CD8-positive, alpha-beta T cell (primary cell): ENCODE measurements at regions of chr4 and their contacts with region 1.

Region 1: GRCh38 chr4:99563310-99564186 is at the start of gene TRMT10A:
- DNase-seq: peak; percentile 87 to 98 (median 95)
- ATAC-seq: peak; percentile 79
- H3K4me3 ChIP-seq: peak within 1 kb of the TSS; percentile 71 to 83
- H3K4me3 Mint-ChIP-seq: peak within 1 kb of the TSS; percentile 94
- H3K27ac ChIP-seq: peak within 1 kb of the TSS; percentile 92 to 96
- H3K27ac Mint-ChIP-seq: peak within 1 kb of the TSS; percentile 99
- H3K4me1 ChIP-seq: no peaks in the 10 kb centered on the region
- H3K4me1 Mint-ChIP-seq: peaks cover 19% of the 10 kb centered on the region
- H3K27me3 ChIP-seq: no peaks in the 10 kb centered on the region
- H3K27me3 Mint-ChIP-seq: peaks cover 19% of the 10 kb centered on the region
- CTCF ChIP-seq: no peak
- total RNA-seq, gene TRMT10A: 0.90 to 1.5 TPM

Region 2: DNA sequence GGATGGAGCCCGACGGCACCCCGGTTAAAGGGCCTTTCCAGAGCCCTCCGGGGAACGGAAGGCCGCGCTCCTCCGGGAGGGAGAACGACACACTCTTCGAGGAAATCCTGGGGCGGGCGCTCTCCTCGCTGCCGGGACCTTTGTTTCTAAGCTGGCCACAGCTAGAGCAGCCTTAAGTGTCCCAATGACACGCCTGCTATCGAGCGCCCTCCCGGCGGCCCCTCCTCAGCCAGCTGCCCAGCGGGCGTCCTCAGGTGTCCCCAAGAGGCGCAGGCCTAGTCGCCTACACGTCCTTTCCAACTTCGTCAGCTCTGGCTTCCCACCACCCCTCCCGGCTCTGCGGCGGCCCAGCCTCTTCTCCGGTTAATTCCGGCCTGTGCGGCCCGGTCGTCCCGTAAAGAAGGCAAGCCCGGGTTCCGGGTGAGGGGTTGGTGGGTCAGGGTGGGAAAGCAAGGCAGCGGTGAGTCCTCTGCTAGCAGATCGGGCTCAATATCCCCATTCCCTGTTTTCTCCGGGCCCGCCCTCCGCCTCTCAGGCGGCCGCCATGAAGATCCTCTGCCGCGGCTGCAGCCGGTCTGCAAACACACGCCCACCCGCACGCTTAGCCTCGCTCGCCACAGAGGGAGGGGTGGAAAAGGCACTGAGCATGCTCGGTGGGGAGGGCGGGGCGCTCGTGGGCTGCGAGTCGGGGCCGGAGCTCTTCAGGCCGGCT is 1302.8 kb before region 1 on chr4:
- CTCF ChIA-PET with region 1: no interaction called
- POLR2A ChIA-PET with region 1: no interaction called
- intact Hi-C with region 1: loop called (anchors 5 kb)
- DNase-seq: peak; percentile 67 to 95 (median 88)
- ATAC-seq: peak; percentile 72
- H3K4me3 ChIP-seq: peak overlapping the region; percentile 89 to 96
- H3K4me3 Mint-ChIP-seq: peak overlapping the region; percentile 94
- H3K27ac ChIP-seq: peak overlapping the region; percentile 77 to 79
- H3K27ac Mint-ChIP-seq: peak overlapping the region; percentile 95
- H3K4me1 ChIP-seq: peaks cover 27% of the 10 kb centered on the region
- H3K4me1 Mint-ChIP-seq: peaks cover 51% of the 10 kb centered on the region
- H3K27me3 ChIP-seq: no peaks in the 10 kb centered on the region
- H3K27me3 Mint-ChIP-seq: no peaks in the 10 kb centered on the region
- CTCF ChIP-seq: no peak

Region 3: DNA sequence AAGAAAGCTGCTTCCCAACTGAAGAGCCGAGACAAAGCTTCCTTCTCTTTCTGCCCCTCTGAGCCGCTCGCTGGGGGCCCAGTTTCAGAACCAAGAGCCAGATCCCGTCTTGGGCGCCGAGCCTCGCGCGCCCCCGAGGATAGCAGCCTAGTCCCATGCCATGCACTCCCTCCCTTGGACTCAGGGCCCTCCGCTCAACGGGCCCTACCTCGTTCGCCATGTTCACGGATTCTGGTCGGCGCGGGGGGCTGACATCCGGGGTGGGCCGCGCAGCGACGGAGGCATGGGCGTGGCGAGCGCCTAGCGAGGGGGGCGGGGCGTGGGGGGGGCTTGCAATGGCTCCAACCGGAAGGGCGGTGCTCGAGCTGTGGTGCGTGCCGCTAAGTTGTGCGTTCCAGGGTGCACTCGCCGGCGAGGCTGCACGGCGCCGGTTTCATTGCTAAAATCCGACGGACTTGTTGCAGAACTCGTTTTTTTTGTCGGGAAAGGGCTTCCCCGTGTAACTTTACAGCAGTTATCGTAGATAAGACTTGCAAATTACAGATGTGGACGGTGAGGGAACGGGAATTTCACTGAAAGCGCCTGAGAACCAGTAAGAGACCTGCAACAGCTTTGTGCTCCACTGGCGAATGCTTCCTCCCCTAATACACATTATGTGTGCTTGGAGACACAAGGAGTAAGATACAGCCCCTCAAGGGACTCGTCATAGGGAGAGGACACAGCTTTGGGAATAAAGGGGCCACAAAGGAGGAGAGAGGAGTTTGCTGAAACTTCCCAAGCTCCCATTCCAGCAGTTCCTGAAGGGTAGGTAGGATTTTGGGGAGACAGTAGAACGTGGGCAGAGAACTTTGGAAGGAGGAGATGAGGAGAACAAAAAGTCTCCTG is 474.8 kb before region 1 on chr4 and contains the start of gene ADH5:
- CTCF ChIA-PET with region 1: no interaction called
- POLR2A ChIA-PET with region 1: interaction called, 5 read pairs
- intact Hi-C with region 1: loop called (anchors 1 to 5 kb)
- DNase-seq: peak; percentile 88 to 94 (median 93)
- ATAC-seq: peak; percentile 96
- H3K4me3 ChIP-seq: peak within 1 kb of the TSS; percentile 59 to 91
- H3K4me3 Mint-ChIP-seq: peak within 1 kb of the TSS; percentile 99
- H3K27ac ChIP-seq: peak within 1 kb of the TSS; percentile 76 to 86
- H3K27ac Mint-ChIP-seq: peak within 1 kb of the TSS; percentile 99
- H3K4me1 ChIP-seq: peaks cover 23% of the 10 kb centered on the region
- H3K4me1 Mint-ChIP-seq: peaks cover 58% of the 10 kb centered on the region
- H3K27me3 ChIP-seq: no peaks in the 10 kb centered on the region
- H3K27me3 Mint-ChIP-seq: no peaks in the 10 kb centered on the region
- CTCF ChIP-seq: no peak
- total RNA-seq, gene ADH5: 50.0 to 51.7 TPM

Region 4: GRCh38 chr4:99615170-99615820 is 51.7 kb after region 1 on chr4:
- CTCF ChIA-PET with region 1: no interaction called
- POLR2A ChIA-PET with region 1: no interaction called
- intact Hi-C with region 1: loop called in 1 of 2 experiments (anchors 1 kb)
- DNase-seq: peak in 2 of 9 experiments; percentile 3 to 4
- ATAC-seq: no peak
- H3K4me3 ChIP-seq: no peak overlapping the region
- H3K4me3 Mint-ChIP-seq: no peak overlapping the region
- H3K27ac ChIP-seq: no peak overlapping the region
- H3K27ac Mint-ChIP-seq: no peak overlapping the region
- H3K4me1 ChIP-seq: no peaks in the 10 kb centered on the region
- H3K4me1 Mint-ChIP-seq: no peaks in the 10 kb centered on the region
- H3K27me3 ChIP-seq: no peaks in the 10 kb centered on the region
- H3K27me3 Mint-ChIP-seq: peaks cover 15% of the 10 kb centered on the region
- CTCF ChIP-seq: no peak

Region 5: GRCh38 chr4:99894161-99894997 is 330.8 kb after region 1 on chr4 and contains the start of gene LAMTOR3:
- CTCF ChIA-PET with region 1: no interaction called
- POLR2A ChIA-PET with region 1: interaction called, 19 read pairs
- intact Hi-C with region 1: loop called in 1 of 2 experiments (anchors 1 kb)
- DNase-seq: peak; percentile 80 to 97 (median 88)
- ATAC-seq: peak; percentile 94
- H3K4me3 ChIP-seq: peak within 1 kb of the TSS; percentile 68 to 80
- H3K4me3 Mint-ChIP-seq: peak within 1 kb of the TSS; percentile 97
- H3K27ac ChIP-seq: peak within 1 kb of the TSS; percentile 77 to 87
- H3K27ac Mint-ChIP-seq: peak within 1 kb of the TSS; percentile 98
- H3K4me1 ChIP-seq: peaks cover 30% of the 10 kb centered on the region
- H3K4me1 Mint-ChIP-seq: peaks cover 49% of the 10 kb centered on the region
- H3K27me3 ChIP-seq: no peaks in the 10 kb centered on the region
- H3K27me3 Mint-ChIP-seq: no peaks in the 10 kb centered on the region
- CTCF ChIP-seq: no peak
- total RNA-seq, gene LAMTOR3: 29.3 to 32.4 TPM

Region 6: GRCh38 chr4:99921174-99921573 is 357.6 kb after region 1 on chr4:
- CTCF ChIA-PET with region 1: no interaction called
- POLR2A ChIA-PET with region 1: no interaction called
- intact Hi-C with region 1: no loop called
- DNase-seq: peak in 3 of 9 experiments; percentile 19 to 53 (median 24)
- ATAC-seq: peak; percentile 92
- H3K4me3 ChIP-seq: no peak overlapping the region
- H3K4me3 Mint-ChIP-seq: no peak overlapping the region
- H3K27ac ChIP-seq: no peak overlapping the region
- H3K27ac Mint-ChIP-seq: peak overlapping the region; percentile 78
- H3K4me1 ChIP-seq: peaks cover 12% of the 10 kb centered on the region
- H3K4me1 Mint-ChIP-seq: peaks cover 33% of the 10 kb centered on the region
- H3K27me3 ChIP-seq: no peaks in the 10 kb centered on the region
- H3K27me3 Mint-ChIP-seq: no peaks in the 10 kb centered on the region
- CTCF ChIP-seq: no peak

Region 7: GRCh38 chr4:100093091-100093866 is 529.7 kb after region 1 on chr4:
- CTCF ChIA-PET with region 1: no interaction called
- POLR2A ChIA-PET with region 1: interaction called, 3 read pairs
- intact Hi-C with region 1: loop called (anchors 5 to 10 kb)
- DNase-seq: peak; percentile 68 to 97 (median 86)
- ATAC-seq: peak; percentile 99
- H3K4me3 ChIP-seq: no peak overlapping the region
- H3K4me3 Mint-ChIP-seq: no peak overlapping the region
- H3K27ac ChIP-seq: peak overlapping the region in 1 of 2 experiments; percentile 59
- H3K27ac Mint-ChIP-seq: peak overlapping the region; percentile 91
- H3K4me1 ChIP-seq: peaks cover 7% of the 10 kb centered on the region
- H3K4me1 Mint-ChIP-seq: peaks cover 18% of the 10 kb centered on the region
- H3K27me3 ChIP-seq: no peaks in the 10 kb centered on the region
- H3K27me3 Mint-ChIP-seq: no peaks in the 10 kb centered on the region
- CTCF ChIP-seq: peak; percentile 71